Psoas muscle (tissue), 8 donors: ENCODE measurements at regions of chr6 and their contacts with region 1.

Region 1: GRCh38 chr6:43856005-43856765 is 86.2 kb downstream of the VEGFA start:
- DNase-seq: peak; percentile 57 to 72
- ATAC-seq: peak; percentile 91 to 96 (median 92)
- H3K4me3 ChIP-seq: no peak overlapping the region
- H3K27ac ChIP-seq: peak overlapping the region; percentile 68
- H3K4me1 ChIP-seq: no peaks in the 10 kb centered on the region
- H3K27me3 ChIP-seq: no peaks in the 10 kb centered on the region
- CTCF ChIP-seq: peak; percentile 53

Region 2: DNA sequence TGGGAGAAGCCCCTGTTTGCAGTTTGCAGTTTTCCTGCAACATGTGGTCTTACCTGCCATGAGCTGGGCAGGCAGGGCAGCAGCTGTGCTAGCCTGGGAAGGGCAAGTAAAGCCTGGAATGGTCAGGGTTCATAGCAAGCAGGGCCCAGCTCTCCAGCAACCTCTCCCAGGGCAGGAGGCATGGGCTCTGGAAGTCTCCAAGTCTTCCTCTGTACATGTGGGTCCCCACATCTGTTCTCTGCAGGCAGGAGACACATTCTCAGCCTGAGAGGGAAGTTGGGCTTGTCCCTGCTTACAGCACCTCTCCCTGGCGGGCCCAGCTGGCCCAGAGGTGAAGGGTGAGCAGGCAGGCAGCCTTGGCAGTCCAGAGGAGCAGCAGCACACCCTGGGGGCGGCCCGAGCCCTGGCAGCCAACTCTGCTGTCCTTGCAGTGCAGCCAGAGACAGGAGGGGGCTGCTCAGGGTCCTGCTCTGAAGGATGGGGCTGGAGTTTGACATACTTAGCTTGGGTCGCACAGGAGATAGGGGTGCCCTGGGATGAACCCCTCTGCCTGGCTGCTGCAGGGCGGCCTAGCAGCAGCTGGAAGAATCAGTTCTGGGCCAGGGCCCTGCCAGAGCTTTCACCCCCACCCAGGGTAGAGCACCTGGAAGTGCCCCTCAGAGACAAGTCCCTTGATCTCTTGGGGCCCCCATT is 95.0 kb after region 1 on chr6:
- intact Hi-C with region 1: loop called in 1 of 2 experiments (anchors 5 kb)
- DNase-seq: peak; percentile 61 to 76
- ATAC-seq: peak; percentile 16 to 31 (median 25)
- H3K4me3 ChIP-seq: no peak overlapping the region
- H3K27ac ChIP-seq: peak overlapping the region; percentile 86
- H3K4me1 ChIP-seq: peaks cover 21% of the 10 kb centered on the region
- H3K27me3 ChIP-seq: no peaks in the 10 kb centered on the region
- CTCF ChIP-seq: peak; percentile 45

Region 3: DNA sequence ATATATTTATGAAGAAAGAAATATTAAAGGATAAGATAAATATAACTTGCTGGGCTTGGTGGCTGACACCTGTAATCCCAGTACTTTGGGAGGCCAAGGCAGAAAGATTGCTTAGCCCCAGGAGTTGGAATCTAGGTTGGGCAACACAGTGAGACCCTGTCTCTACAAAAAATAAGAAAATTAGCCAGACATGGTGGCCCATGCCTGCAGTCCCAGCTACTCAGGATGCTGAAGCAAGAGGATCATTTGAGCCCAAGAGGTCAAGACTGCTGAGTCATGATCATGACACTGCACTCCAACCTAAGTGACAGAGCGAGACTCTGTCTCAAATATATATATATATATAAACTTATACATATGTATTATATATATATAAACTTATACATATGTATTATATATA is 107.0 kb after region 1 on chr6:
- intact Hi-C with region 1: no loop called
- DNase-seq: no peak
- ATAC-seq: peak; percentile 57 to 74 (median 65)
- H3K4me3 ChIP-seq: no peak overlapping the region
- H3K27ac ChIP-seq: no peak overlapping the region
- H3K4me1 ChIP-seq: no peaks in the 10 kb centered on the region
- H3K27me3 ChIP-seq: no peaks in the 10 kb centered on the region
- CTCF ChIP-seq: no peak